Activated T-helper 1 cell treated with anti-CD3 and anti-CD28 coated beads, Interleukin-12 subunit alpha, Interleukin-12 subunit beta, Interleukin-2, Interleukin-4 antibody, amounts not matched to agents 30 ng/mL and 10 ng/mL and 1 ng/mL, durations not matched to agents 14 hours and 24 hours and 36 hours (primary cell): ENCODE measurements at regions of chr1 and their contacts with region 1.

Region 1: GRCh38 chr1:15345711-15346355 is 63.9 kb upstream of the EFHD2 start:
- DNase-seq: peak; percentile 68
- H3K4me3 Mint-ChIP-seq: peak overlapping the region; percentile 38
- H3K27ac Mint-ChIP-seq: peak overlapping the region; percentile 85
- H3K4me1 Mint-ChIP-seq: peaks cover 68% of the 10 kb centered on the region
- H3K27me3 Mint-ChIP-seq: peaks cover 3% of the 10 kb centered on the region

Region 2: GRCh38 chr1:15231714-15232201 is 114.1 kb before region 1 on chr1:
- intact Hi-C with region 1: loop called (anchors 5 kb)
- DNase-seq: peak; percentile 15
- H3K4me3 Mint-ChIP-seq: peak overlapping the region; percentile 1
- H3K27ac Mint-ChIP-seq: no peak overlapping the region
- H3K4me1 Mint-ChIP-seq: peaks cover 17% of the 10 kb centered on the region
- H3K27me3 Mint-ChIP-seq: peaks cover 25% of the 10 kb centered on the region

Region 3: GRCh38 chr1:15328351-15329103 is 17.3 kb before region 1 on chr1:
- intact Hi-C with region 1: loop called (anchors 1 kb)
- DNase-seq: no peak
- H3K4me3 Mint-ChIP-seq: no peak overlapping the region
- H3K27ac Mint-ChIP-seq: no peak overlapping the region
- H3K4me1 Mint-ChIP-seq: peaks cover 10% of the 10 kb centered on the region
- H3K27me3 Mint-ChIP-seq: peaks cover 36% of the 10 kb centered on the region

Region 4: GRCh38 chr1:15384301-15384901 is 38.6 kb after region 1 on chr1:
- intact Hi-C with region 1: loop called (anchors 2 kb)
- DNase-seq: no peak
- H3K4me3 Mint-ChIP-seq: peak overlapping the region; percentile 62
- H3K27ac Mint-ChIP-seq: no peak overlapping the region
- H3K4me1 Mint-ChIP-seq: peaks cover 6% of the 10 kb centered on the region
- H3K27me3 Mint-ChIP-seq: peaks cover 35% of the 10 kb centered on the region

Region 5: GRCh38 chr1:15417365-15417934 is 71.6 kb after region 1 on chr1:
- intact Hi-C with region 1: loop called (anchors 1 kb)
- DNase-seq: peak; percentile 64
- H3K4me3 Mint-ChIP-seq: peak overlapping the region; percentile 62
- H3K27ac Mint-ChIP-seq: peak overlapping the region; percentile 84
- H3K4me1 Mint-ChIP-seq: peaks cover 65% of the 10 kb centered on the region
- H3K27me3 Mint-ChIP-seq: no peaks in the 10 kb centered on the region

Region 6: GRCh38 chr1:15847100-15847892 is 501.5 kb after region 1 on chr1 and contains the start of gene SPEN:
- intact Hi-C with region 1: no loop called
- DNase-seq: peak; percentile 98
- H3K4me3 Mint-ChIP-seq: peak within 1 kb of the TSS; percentile 94
- H3K27ac Mint-ChIP-seq: peak within 1 kb of the TSS; percentile 95
- H3K4me1 Mint-ChIP-seq: peaks cover 41% of the 10 kb centered on the region
- H3K27me3 Mint-ChIP-seq: no peaks in the 10 kb centered on the region
- total RNA-seq, gene SPEN: 81.9 and 87.6 TPM in 2 replicates